Prostate gland (tissue), 2 donors: ENCODE measurements at regions of chrX and their contacts with region 1.

Region 1: GRCh38 chrX:133792198-133792953 is 193.0 kb downstream of the GPC3 start:
- DNase-seq: peak; percentile 33
- H3K4me3 ChIP-seq: no peak overlapping the region
- H3K27ac ChIP-seq: no peak overlapping the region
- H3K4me1 ChIP-seq: no peaks in the 10 kb centered on the region
- H3K27me3 ChIP-seq: no peaks in the 10 kb centered on the region
- CTCF ChIP-seq: peak; percentile 71 to 84 (median 79)
- POLR2A ChIP-seq: no peak

Region 2: DNA sequence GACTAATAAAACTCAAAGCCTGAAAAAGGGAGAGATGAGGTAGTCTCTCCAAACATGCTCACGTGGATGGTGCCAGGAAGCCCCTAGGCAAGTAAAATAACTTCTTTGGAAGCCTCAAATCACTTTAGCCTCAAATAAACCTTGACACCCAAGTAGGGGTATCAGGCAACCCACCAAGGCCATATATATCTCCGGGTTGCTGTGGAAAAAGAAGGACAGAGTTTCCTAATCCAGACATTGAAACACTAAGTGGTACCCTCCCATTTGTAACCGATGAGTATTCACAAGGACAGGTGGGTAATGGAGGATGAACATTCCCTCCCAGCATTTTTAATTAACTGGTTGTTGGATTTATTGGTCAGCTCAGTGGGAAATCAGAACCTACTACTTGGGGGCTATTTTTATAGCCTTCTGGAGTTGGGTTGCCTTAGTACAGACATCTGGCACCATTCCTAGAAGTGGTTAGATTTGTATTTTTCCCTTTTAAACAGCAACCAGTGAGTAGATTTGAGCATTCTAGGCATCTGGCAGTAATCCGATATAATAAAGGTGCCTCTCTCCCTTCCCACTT is 105.3 kb after region 1 on chrX:
- intact Hi-C with region 1: no loop called
- DNase-seq: no peak
- H3K4me3 ChIP-seq: no peak overlapping the region
- H3K27ac ChIP-seq: no peak overlapping the region
- H3K4me1 ChIP-seq: no peaks in the 10 kb centered on the region
- H3K27me3 ChIP-seq: no peaks in the 10 kb centered on the region
- CTCF ChIP-seq: no peak
- POLR2A ChIP-seq: no peak

Region 3: GRCh38 chrX:134026565-134027311 is 234.4 kb after region 1 on chrX:
- intact Hi-C with region 1: loop called (anchors 5 kb)
- DNase-seq: peak; percentile 32
- H3K4me3 ChIP-seq: no peak overlapping the region
- H3K27ac ChIP-seq: no peak overlapping the region
- H3K4me1 ChIP-seq: no peaks in the 10 kb centered on the region
- H3K27me3 ChIP-seq: no peaks in the 10 kb centered on the region
- CTCF ChIP-seq: peak in 3 of 4 experiments; percentile 31 to 37 (median 34)
- POLR2A ChIP-seq: no peak

Region 4: GRCh38 chrX:134396174-134396573 is 603.8 kb after region 1 on chrX:
- intact Hi-C with region 1: loop called (anchors 5 kb)
- DNase-seq: no peak
- H3K4me3 ChIP-seq: no peak overlapping the region
- H3K27ac ChIP-seq: no peak overlapping the region
- H3K4me1 ChIP-seq: no peaks in the 10 kb centered on the region
- H3K27me3 ChIP-seq: no peaks in the 10 kb centered on the region
- CTCF ChIP-seq: peak in 3 of 4 experiments; percentile 34 to 59 (median 56)
- POLR2A ChIP-seq: no peak